Activated B cell treated with CpG ODN at 0.5 μM for 24 hours (primary cell): ENCODE measurements at regions of chr3 and their contacts with region 1.

Region 1: DNA sequence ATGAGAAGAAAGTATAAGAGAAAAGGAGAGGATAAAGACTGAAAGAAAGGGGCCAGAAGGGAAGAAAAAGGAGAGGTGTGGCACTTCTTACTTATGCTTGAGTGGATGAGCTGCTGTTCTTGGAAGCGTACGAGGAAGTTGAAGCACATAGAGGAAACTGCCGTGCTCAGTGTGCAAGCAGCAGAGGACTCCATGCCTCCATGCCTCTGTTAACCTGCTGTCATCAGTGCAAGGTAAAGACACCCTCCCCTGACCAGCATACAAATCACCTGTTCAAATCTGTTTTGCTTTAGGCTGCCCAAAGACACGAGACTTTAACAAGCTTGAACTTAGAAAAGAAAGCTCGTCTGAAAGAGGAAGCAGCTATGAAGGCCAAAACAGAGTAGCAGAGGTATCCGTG is 6.4 kb downstream of the WDR5B start:
- DNase-seq: no peak
- ATAC-seq: peak; percentile 58
- H3K4me3 Mint-ChIP-seq: peak overlapping the region; percentile 68
- H3K27ac Mint-ChIP-seq: peak overlapping the region; percentile 87
- H3K4me1 Mint-ChIP-seq: peaks cover 39% of the 10 kb centered on the region
- H3K27me3 Mint-ChIP-seq: no peaks in the 10 kb centered on the region
- CTCF ChIP-seq: no peak

Region 2: DNA sequence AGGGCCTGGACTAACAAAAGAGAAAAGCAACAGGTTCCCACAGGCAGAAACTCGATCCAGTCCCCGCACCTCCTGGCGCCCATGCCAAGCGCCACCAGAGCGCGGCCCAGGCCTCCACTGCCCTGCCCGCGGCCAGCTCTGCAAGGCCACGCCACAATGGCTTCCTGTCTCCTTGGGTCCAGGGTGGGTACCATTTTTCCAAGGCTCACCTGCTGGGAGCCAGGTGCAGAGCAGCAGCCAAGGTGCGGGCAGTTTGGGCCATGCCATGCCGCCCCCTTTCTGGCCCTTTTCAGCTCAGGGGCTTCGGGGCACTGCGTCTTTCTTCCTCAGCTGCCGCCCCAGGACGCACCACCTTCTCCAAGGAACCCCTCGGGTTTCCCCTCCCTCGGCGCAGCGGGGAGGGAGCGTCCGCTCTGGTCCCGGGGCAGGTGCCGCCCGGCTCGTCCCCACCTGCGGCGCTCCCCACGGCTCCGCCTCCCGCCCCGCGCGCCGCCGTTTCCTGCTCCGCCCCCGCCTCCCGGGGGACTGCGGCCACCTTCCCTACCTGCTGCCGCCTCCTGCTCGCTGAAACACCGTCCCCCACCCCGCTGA is 387.5 kb before region 1 on chr3 and contains the start of gene ILDR1:
- CTCF ChIA-PET with region 1: no interaction called
- POLR2A ChIA-PET with region 1: no interaction called
- intact Hi-C with region 1: no loop called
- DNase-seq: peak; percentile 72
- ATAC-seq: peak; percentile 89
- H3K4me3 Mint-ChIP-seq: peak within 1 kb of the TSS; percentile 77
- H3K27ac Mint-ChIP-seq: peak within 1 kb of the TSS; percentile 50
- H3K4me1 Mint-ChIP-seq: peaks cover 52% of the 10 kb centered on the region
- H3K27me3 Mint-ChIP-seq: no peaks in the 10 kb centered on the region
- CTCF ChIP-seq: no peak
- total RNA-seq, gene ILDR1: 1.3 and 1.4 TPM in 2 replicates

Region 3: GRCh38 chr3:122208579-122208978 is 200.9 kb before region 1 on chr3:
- CTCF ChIA-PET with region 1: no interaction called
- POLR2A ChIA-PET with region 1: no interaction called
- intact Hi-C with region 1: no loop called
- DNase-seq: no peak
- ATAC-seq: no peak
- H3K4me3 Mint-ChIP-seq: no peak overlapping the region
- H3K27ac Mint-ChIP-seq: no peak overlapping the region
- H3K4me1 Mint-ChIP-seq: no peaks in the 10 kb centered on the region
- H3K27me3 Mint-ChIP-seq: peaks cover 3% of the 10 kb centered on the region
- CTCF ChIP-seq: no peak

Region 4: DNA sequence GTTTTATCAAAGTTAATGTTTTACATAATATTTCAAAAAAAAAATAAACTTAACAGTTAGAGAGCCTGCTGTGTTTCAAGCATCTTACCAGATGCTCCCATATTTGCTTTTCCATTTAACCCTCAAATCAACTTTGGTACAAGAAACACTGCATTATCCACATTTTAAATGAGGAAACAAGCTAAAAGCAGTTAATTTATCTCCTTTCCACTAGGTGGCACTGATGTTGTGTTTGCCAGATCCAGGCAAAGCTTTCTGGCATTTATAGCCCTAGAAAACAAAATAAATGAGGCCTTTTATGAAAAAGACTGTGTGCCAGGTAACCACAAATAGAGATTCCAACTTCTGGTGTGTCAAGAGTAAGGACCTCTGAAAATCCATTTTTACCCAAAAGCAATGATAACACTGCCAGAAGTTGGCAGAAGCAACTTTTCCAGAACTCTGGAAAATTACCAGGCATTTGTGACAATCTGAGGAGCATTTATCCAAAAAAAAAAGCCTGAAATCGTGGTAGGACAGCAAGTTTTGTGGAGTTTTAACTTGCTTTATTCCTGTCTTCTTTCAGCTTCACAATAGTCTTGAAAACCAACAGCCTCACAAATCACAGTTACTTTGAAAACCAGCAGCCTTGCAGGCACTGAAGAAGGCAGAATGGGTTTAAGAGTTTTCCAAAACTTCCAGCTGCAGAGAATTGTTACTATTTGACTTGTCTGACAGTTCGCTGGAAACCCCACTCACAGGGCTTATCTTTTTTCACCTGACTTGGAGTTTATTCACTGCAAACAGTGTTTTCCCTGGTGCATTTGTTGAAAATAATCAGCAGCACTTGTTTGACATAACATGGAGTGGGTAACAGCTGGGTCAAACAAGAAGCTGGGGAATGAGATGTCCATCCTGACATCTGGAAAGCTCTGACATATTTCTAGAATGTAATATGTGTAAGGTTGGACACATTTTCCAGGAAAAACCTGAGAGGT is 16.3 kb before region 1 on chr3:
- CTCF ChIA-PET with region 1: interaction called, 11 read pairs
- POLR2A ChIA-PET with region 1: interaction called, 3 read pairs
- intact Hi-C with region 1: loop called (anchors 2 kb)
- DNase-seq: no peak
- ATAC-seq: no peak
- H3K4me3 Mint-ChIP-seq: no peak overlapping the region
- H3K27ac Mint-ChIP-seq: no peak overlapping the region
- H3K4me1 Mint-ChIP-seq: peaks cover 15% of the 10 kb centered on the region
- H3K27me3 Mint-ChIP-seq: no peaks in the 10 kb centered on the region
- CTCF ChIP-seq: peak; percentile 87

Region 5: DNA sequence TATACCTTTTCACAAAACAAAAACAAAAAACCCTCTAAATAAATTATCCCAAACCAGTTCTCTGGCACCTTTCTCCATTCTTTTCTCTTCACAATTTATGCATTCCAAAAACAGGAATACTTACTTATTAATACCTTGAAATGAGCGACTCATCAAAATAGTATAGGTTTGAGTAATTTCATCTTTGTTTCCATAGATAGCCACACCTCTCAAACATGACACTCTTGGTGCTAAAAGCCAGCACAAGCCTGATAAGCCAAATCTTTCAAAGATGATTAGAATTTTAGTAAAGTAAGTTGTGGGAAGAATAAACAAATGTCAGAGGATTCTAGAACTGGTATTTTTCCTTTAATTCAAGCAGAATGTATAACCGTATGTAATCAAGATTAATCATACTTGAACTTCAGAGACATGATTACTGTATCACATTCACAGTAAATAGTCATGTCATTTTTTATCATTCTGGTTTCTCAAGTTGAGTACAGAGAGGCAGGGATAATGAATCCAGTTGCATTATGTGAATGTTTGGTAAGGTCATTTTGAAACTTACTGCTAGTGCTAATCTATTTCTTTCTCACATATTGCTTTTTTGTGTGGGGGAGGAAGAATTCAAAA is 18.5 kb after region 1 on chr3:
- CTCF ChIA-PET with region 1: no interaction called
- POLR2A ChIA-PET with region 1: no interaction called
- intact Hi-C with region 1: no loop called
- DNase-seq: no peak
- ATAC-seq: no peak
- H3K4me3 Mint-ChIP-seq: no peak overlapping the region
- H3K27ac Mint-ChIP-seq: no peak overlapping the region
- H3K4me1 Mint-ChIP-seq: no peaks in the 10 kb centered on the region
- H3K27me3 Mint-ChIP-seq: no peaks in the 10 kb centered on the region
- CTCF ChIP-seq: no peak

Region 6: DNA sequence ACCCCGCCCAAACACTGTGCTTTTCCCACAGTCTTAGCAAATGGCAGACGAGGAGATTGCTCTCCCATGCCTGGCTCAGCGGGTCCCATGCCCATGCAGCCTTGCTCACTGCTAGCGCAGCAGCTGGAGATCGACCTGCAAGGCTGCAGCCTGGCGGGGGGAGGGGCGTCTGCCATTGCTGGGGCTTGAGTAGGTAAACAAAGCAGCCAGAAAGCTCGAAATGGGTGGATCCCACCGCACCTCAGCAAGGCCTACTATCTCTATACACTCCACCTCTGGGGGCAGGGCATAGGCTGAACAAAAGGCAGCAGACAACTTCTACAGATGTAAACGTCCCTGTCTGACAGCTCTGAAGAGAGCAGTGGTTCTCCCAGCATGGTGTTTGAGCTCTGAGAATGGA is 33.6 kb after region 1 on chr3:
- CTCF ChIA-PET with region 1: no interaction called
- POLR2A ChIA-PET with region 1: no interaction called
- intact Hi-C with region 1: no loop called
- DNase-seq: no peak
- ATAC-seq: no peak
- H3K4me3 Mint-ChIP-seq: no peak overlapping the region
- H3K27ac Mint-ChIP-seq: no peak overlapping the region
- H3K4me1 Mint-ChIP-seq: peaks cover 12% of the 10 kb centered on the region
- H3K27me3 Mint-ChIP-seq: no peaks in the 10 kb centered on the region
- CTCF ChIP-seq: no peak